ENCODE measurements at regions of chr11 and their contacts with region 1.

Region 1: GRCh38 chr11:123696183-123696582 is 41.8 kb upstream of the SCN3B start:
- DNase-seq: no peak
- ATAC-seq: no peak
- H3K4me3 ChIP-seq: no peak overlapping the region
- H3K27ac ChIP-seq: no peak overlapping the region
- H3K4me1 ChIP-seq: no peaks in the 10 kb centered on the region
- H3K27me3 ChIP-seq: peaks cover 0 to 45% (median 10%) of the 10 kb centered on the region in 7 donors
- CTCF ChIP-seq: no peak

Region 2: GRCh38 chr11:123166071-123166559 is 530.1 kb before region 1 on chr11:
- intact Hi-C with region 1: no loop called
- DNase-seq: peak; percentile 14 to 32
- ATAC-seq: peak in 6 of 8 donors; percentile 28 to 61 (median 48)
- H3K4me3 ChIP-seq: no peak overlapping the region
- H3K27ac ChIP-seq: no peak overlapping the region
- H3K4me1 ChIP-seq: peaks cover 0 to 7% (median 0%) of the 10 kb centered on the region in 9 donors
- H3K27me3 ChIP-seq: peaks cover 0 to 19% (median 6%) of the 10 kb centered on the region in 7 donors
- CTCF ChIP-seq: peak in 8 of 9 donors; percentile 23 to 61 (median 48)

Region 3: DNA sequence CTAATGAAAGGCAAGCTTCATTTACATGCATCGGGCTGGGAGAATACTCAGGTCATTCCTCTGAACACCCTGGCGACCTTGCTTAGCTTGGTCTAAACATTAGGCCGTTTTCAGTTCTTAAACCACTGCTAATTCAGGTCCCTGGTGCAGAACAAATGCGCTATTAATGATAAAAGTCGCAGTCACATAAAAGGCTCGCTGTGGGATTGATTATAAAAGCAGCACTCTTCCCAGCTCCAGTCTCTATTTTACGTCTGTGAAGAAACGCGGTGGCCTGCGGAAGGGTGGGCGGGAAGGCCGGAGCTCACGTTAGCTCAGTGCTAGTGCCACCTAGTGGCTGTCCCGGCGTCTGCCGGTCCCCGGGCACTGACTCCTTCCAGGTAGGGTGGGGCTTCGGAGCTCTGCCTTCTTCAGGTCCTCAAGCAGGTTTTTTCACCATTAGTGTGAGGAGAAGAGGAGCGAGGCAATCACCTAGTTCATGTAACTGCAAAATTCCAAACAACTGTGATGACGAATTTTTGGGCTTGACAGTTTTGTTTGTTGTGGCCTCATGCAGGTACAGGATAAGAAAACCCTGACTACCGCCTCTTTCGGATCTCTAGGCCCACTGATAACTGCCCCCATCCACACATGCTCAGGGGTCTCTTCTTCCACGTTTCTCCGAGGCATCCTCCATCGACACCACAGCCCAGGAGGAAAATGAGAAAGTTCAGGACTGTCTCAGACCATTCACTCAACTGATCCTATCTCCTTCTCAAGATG is 434.7 kb before region 1 on chr11:
- intact Hi-C with region 1: no loop called
- DNase-seq: peak; percentile 78 to 85
- ATAC-seq: peak; percentile 85 to 95 (median 90)
- H3K4me3 ChIP-seq: peak overlapping the region in 6 of 10 donors; percentile 10 to 44 (median 30)
- H3K27ac ChIP-seq: no peak overlapping the region
- H3K4me1 ChIP-seq: peaks cover 0 to 15% (median 5%) of the 10 kb centered on the region in 9 donors
- H3K27me3 ChIP-seq: peaks cover 0 to 44% (median 20%) of the 10 kb centered on the region in 7 donors
- CTCF ChIP-seq: peak; percentile 89 to 97 (median 94)

Region 4: GRCh38 chr11:123628936-123629683 is 67.1 kb before region 1 on chr11:
- intact Hi-C with region 1: no loop called
- DNase-seq: peak; percentile 81 to 87
- ATAC-seq: peak; percentile 76 to 94 (median 91)
- H3K4me3 ChIP-seq: no peak overlapping the region
- H3K27ac ChIP-seq: peak overlapping the region in 4 of 10 donors; percentile 19 to 52 (median 34)
- H3K4me1 ChIP-seq: peaks cover 0 to 22% (median 18%) of the 10 kb centered on the region in 9 donors
- H3K27me3 ChIP-seq: no peaks in the 10 kb centered on the region
- CTCF ChIP-seq: no peak

Region 5: GRCh38 chr11:123640677-123641494 is 55.3 kb before region 1 on chr11:
- intact Hi-C with region 1: loop called in 1 of 10 experiments (anchors 5 kb)
- DNase-seq: peak; percentile 19 to 29
- ATAC-seq: peak; percentile 69 to 89 (median 77)
- H3K4me3 ChIP-seq: no peak overlapping the region
- H3K27ac ChIP-seq: no peak overlapping the region
- H3K4me1 ChIP-seq: peaks cover 0 to 5% (median 0%) of the 10 kb centered on the region in 9 donors
- H3K27me3 ChIP-seq: no peaks in the 10 kb centered on the region
- CTCF ChIP-seq: peak; percentile 47 to 86 (median 81)

Region 6: DNA sequence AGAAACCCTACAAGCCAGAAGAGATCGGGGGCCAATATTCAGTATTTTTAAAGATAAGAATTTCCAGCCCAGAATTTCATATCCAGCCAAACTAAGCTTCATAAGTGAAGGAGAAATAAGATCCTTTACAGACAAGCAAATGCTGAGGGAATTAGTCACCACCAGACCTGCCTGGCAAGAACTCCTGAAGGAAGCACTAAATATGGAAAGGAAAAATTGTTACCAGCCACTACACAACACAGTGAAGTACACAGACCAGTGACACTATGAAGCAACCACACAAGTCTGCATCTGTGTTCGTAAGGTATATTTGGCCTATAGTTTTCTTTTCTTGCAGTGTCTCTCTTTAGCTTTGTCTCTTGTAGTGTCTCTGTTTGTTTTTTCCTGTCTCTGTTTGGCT is 160.3 kb after region 1 on chr11:
- intact Hi-C with region 1: no loop called
- DNase-seq: no peak
- ATAC-seq: no peak
- H3K4me3 ChIP-seq: no peak overlapping the region
- H3K27ac ChIP-seq: no peak overlapping the region
- H3K4me1 ChIP-seq: no peaks in the 10 kb centered on the region
- H3K27me3 ChIP-seq: peaks cover 0 to 6% (median 0%) of the 10 kb centered on the region in 7 donors
- CTCF ChIP-seq: no peak